ENCODE measurements at regions of chr3 and their contacts with region 1.

Region 1: DNA sequence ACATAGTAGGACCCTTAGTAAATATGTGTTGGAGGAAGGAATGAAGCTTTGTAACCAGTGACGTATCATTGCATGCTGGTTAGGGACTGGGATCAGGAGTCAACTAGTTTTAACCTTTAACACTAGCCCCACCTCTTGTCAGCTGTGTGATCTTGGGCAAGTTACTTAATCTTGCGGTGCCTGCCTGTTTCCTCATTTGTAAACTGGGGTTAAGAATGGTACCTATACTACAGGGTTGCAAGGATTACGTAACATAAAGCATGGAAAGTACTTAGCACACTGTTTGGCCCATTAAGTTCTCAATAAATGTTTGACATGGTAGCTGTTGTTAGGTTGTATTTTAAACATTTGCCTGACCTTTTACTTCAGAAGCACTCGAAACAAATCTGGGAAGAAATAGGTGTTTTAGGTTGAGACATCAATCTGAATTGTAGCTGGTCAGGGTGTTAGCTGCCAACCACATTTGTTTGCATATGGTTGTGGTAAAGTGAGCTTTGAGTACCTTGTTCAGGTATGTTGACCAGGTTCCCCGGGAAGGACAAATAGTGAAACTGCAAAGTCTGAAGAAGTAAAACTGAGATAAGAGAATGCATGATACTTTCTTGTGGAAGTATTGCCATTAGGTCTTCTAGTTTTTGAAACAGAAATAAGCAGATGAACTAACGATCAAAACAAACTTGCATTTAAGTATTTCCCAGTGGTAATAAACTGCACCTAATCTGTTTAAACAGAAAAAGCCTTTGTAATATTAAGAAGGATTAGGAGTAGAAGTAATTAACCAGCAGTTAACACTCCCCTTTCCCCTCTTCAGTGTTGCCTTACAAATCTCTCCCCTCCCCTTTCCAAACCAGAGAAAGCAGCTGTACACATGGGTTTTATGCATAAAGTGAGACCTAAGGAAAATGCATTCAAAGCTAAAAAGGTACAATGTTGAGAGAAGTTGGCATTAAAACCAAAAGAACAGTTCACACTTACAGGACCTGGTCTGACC is 25.8 kb upstream of the SCAANT1 start:
- DNase-seq: no peak
- ATAC-seq: peak; percentile 59
- H3K4me3 Mint-ChIP-seq: no peak overlapping the region
- H3K27ac Mint-ChIP-seq: peak overlapping the region; percentile 64
- H3K4me1 Mint-ChIP-seq: peaks cover 49% of the 10 kb centered on the region
- H3K27me3 Mint-ChIP-seq: no peaks in the 10 kb centered on the region
- CTCF ChIP-seq: no peak

Region 2: GRCh38 chr3:63370094-63370493 is 567.9 kb before region 1 on chr3:
- CTCF ChIA-PET with region 1: no interaction called
- POLR2A ChIA-PET with region 1: no interaction called
- intact Hi-C with region 1: no loop called
- DNase-seq: no peak
- ATAC-seq: no peak
- H3K4me3 Mint-ChIP-seq: no peak overlapping the region
- H3K27ac Mint-ChIP-seq: no peak overlapping the region
- H3K4me1 Mint-ChIP-seq: no peaks in the 10 kb centered on the region
- H3K27me3 Mint-ChIP-seq: peaks cover 2% of the 10 kb centered on the region
- CTCF ChIP-seq: no peak

Region 3: GRCh38 chr3:63470745-63471144 is 467.2 kb before region 1 on chr3:
- CTCF ChIA-PET with region 1: no interaction called
- POLR2A ChIA-PET with region 1: no interaction called
- intact Hi-C with region 1: no loop called
- DNase-seq: no peak
- ATAC-seq: no peak
- H3K4me3 Mint-ChIP-seq: no peak overlapping the region
- H3K27ac Mint-ChIP-seq: no peak overlapping the region
- H3K4me1 Mint-ChIP-seq: no peaks in the 10 kb centered on the region
- H3K27me3 Mint-ChIP-seq: no peaks in the 10 kb centered on the region
- CTCF ChIP-seq: no peak

Region 4: GRCh38 chr3:63921741-63922482 is 16.0 kb before region 1 on chr3:
- CTCF ChIA-PET with region 1: no interaction called
- POLR2A ChIA-PET with region 1: interaction called, 11 read pairs
- intact Hi-C with region 1: loop called (anchors 1 kb)
- DNase-seq: peak; percentile 27
- ATAC-seq: peak; percentile 89
- H3K4me3 Mint-ChIP-seq: peak overlapping the region; percentile 56
- H3K27ac Mint-ChIP-seq: peak overlapping the region; percentile 84
- H3K4me1 Mint-ChIP-seq: peaks cover 89% of the 10 kb centered on the region
- H3K27me3 Mint-ChIP-seq: no peaks in the 10 kb centered on the region
- CTCF ChIP-seq: no peak

Region 5: DNA sequence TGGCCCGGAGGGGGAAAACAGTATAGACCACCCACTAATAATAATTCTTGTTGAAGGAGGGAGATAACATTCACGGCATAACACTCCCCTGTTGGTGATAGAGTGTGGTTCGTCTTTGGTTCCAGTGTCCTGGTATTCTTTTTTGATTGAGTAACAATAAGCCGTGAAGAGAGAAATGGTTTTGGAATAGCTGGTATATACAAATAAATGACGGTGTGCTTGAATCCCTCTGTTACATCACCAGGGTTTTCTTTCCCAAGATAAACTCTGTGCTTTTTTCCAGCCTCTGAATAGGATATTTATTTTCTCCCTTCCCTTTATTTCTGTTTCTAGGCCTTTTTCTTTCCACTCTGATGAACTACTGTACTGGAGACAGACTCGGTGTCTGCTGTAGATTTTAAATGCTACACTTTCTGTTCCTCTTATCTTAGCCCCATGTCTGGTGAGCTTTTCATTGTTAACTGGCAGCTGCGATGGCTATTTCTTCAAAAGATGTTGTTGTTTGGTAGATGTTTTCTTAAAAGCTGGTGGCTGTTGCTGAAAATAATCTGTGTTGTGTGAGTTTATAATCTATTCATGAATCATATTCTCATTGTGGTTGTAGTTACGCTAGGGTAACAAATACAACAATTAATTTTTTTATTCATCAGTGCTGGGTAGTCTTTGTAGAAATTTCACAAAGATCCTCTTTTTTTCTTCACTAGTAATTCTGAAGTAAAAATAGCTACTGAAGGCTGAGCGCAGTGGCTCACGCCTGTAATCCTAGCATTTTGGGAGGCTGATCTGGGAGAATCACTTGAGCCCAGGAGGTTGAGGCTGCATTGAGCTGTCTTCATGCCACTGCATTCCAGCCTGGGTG is 10.3 kb before region 1 on chr3:
- CTCF ChIA-PET with region 1: interaction called, 4 read pairs
- POLR2A ChIA-PET with region 1: interaction called, 11 read pairs
- intact Hi-C with region 1: loop called (anchors 1 kb)
- DNase-seq: no peak
- ATAC-seq: peak; percentile 89
- H3K4me3 Mint-ChIP-seq: peak overlapping the region; percentile 71
- H3K27ac Mint-ChIP-seq: peak overlapping the region; percentile 95
- H3K4me1 Mint-ChIP-seq: peaks cover 86% of the 10 kb centered on the region
- H3K27me3 Mint-ChIP-seq: no peaks in the 10 kb centered on the region
- CTCF ChIP-seq: no peak

Region 6: GRCh38 chr3:64150623-64151207 is 212.8 kb after region 1 on chr3:
- CTCF ChIA-PET with region 1: no interaction called
- POLR2A ChIA-PET with region 1: no interaction called
- intact Hi-C with region 1: no loop called
- DNase-seq: no peak
- ATAC-seq: no peak
- H3K4me3 Mint-ChIP-seq: no peak overlapping the region
- H3K27ac Mint-ChIP-seq: no peak overlapping the region
- H3K4me1 Mint-ChIP-seq: no peaks in the 10 kb centered on the region
- H3K27me3 Mint-ChIP-seq: no peaks in the 10 kb centered on the region
- CTCF ChIP-seq: no peak

Region 7: GRCh38 chr3:64584179-64584578 is 646.2 kb after region 1 on chr3:
- CTCF ChIA-PET with region 1: no interaction called
- POLR2A ChIA-PET with region 1: no interaction called
- intact Hi-C with region 1: no loop called
- DNase-seq: no peak
- ATAC-seq: no peak
- H3K4me3 Mint-ChIP-seq: no peak overlapping the region
- H3K27ac Mint-ChIP-seq: no peak overlapping the region
- H3K4me1 Mint-ChIP-seq: no peaks in the 10 kb centered on the region
- H3K27me3 Mint-ChIP-seq: no peaks in the 10 kb centered on the region
- CTCF ChIP-seq: no peak